Posterior vena cava (tissue), 2 donors: ENCODE measurements at regions of chr16 and their contacts with region 1.

Region 1: DNA sequence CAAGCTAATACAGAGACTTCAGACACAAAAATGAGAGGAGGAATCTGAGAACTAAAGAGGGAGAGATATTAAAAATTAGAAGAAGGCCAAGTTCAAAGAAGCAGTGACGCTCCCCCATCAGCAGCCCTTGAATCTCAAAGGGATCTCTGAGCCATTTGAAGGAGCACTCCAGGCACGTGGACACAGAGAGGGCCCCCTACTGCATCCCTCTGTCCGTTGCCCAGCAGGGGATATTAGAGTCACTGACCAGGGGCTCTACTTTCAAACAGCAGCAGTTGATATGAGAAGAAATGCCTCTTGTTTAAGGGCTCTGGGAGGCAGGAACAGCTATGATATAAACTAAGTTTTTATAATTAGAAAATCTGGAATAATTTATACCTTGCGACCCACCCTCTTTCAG is 479.0 kb upstream of the SALL1 start:
- DNase-seq: no peak

Region 2: GRCh38 chr16:51924744-51925143 is 294.7 kb after region 1 on chr16:
- intact Hi-C with region 1: loop called in 1 of 2 experiments (anchors 5 kb)
- DNase-seq: no peak